ENCODE measurements at regions of chr20 and their contacts with region 1.

Region 1: GRCh38 chr20:31723319-31724078 is 831 bp upstream of the BCL2L1 start:
- DNase-seq: peak; percentile 99
- ATAC-seq: peak; percentile 88
- H3K4me3 Mint-ChIP-seq: peak overlapping the region; percentile 97
- H3K27ac Mint-ChIP-seq: peak overlapping the region; percentile 90
- H3K4me1 Mint-ChIP-seq: peaks cover 7% of the 10 kb centered on the region
- H3K27me3 Mint-ChIP-seq: no peaks in the 10 kb centered on the region

Region 2: GRCh38 chr20:30910937-30911725 is 812.4 kb before region 1 on chr20:
- CTCF ChIA-PET with region 1: no interaction called
- POLR2A ChIA-PET with region 1: no interaction called
- intact Hi-C with region 1: no loop called
- DNase-seq: no peak
- ATAC-seq: no peak
- H3K4me3 Mint-ChIP-seq: no peak overlapping the region
- H3K27ac Mint-ChIP-seq: no peak overlapping the region
- H3K4me1 Mint-ChIP-seq: no peaks in the 10 kb centered on the region
- H3K27me3 Mint-ChIP-seq: peaks cover 13% of the 10 kb centered on the region

Region 3: DNA sequence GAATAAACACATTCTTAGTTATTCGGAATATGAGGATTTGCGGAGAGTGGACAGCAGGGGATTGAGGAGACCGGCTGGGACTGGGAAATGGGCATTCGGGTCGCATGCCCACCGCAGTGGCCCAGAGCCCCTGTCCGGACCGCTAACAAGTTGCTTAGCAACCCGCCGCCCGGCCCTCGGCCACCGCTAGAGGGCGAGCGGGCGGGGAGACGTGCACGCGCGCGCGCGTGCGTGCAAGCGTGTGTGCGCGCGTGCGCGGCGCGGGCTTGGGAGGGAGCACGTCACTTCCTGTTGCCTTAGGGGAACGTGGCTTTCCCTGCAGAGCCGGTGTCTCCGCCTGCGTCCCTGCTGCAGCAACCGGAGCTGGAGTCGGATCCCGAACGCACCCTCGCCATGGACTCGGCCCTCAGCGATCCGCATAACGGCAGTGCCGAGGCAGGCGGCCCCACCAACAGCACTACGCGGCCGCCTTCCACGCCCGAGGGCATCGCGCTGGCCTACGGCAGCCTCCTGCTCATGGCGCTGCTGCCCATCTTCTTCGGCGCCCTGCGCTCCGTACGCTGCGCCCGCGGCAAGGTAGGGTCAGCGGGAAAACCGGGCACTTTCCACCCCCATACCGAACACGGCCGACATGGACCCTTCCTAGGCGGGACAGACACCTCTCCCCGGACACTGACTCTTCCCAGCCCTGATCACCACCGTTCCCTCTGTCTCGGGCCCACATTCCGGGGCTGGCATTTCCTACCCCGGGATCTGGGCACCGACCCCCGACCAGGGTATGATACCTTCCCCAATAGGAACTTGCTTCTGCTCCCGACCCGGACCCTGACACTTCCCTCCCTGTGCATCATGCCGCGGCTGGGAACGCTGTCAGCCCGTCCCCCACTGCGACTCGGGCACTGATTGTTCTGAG is 209.1 kb before region 1 on chr20 and contains the start of gene HM13:
- CTCF ChIA-PET with region 1: no interaction called
- POLR2A ChIA-PET with region 1: no interaction called
- intact Hi-C with region 1: loop called (anchors 1 kb)
- DNase-seq: peak; percentile 93
- ATAC-seq: peak; percentile 79
- H3K4me3 Mint-ChIP-seq: no peak within 1 kb of the TSS
- H3K27ac Mint-ChIP-seq: peak within 1 kb of the TSS; percentile 58
- H3K4me1 Mint-ChIP-seq: peaks cover 6% of the 10 kb centered on the region
- H3K27me3 Mint-ChIP-seq: no peaks in the 10 kb centered on the region
- total RNA-seq, gene HM13: 108 to 111 TPM

Region 4: DNA sequence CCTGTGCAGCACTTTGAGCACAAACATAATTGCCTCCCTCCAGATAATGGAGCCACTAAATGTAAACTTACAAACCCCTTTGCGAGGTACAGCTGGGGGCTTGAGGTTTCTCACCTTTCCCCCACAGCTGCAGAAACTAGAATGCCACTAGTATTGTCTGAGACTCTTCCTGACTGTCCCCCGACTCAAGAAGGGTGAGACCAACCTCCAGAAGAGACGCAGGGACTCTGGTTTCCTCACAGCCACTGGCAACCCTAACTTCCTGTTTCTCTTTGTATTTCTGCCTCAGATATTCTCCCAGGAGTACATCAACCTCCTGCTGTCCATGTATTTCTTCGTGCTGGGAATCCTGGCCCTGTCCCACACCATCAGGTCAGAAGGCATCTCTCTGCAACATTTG is 185.6 kb before region 1 on chr20:
- CTCF ChIA-PET with region 1: no interaction called
- POLR2A ChIA-PET with region 1: no interaction called
- intact Hi-C with region 1: no loop called
- DNase-seq: no peak
- ATAC-seq: no peak
- H3K4me3 Mint-ChIP-seq: no peak overlapping the region
- H3K27ac Mint-ChIP-seq: peak overlapping the region; percentile 19
- H3K4me1 Mint-ChIP-seq: peaks cover 16% of the 10 kb centered on the region
- H3K27me3 Mint-ChIP-seq: no peaks in the 10 kb centered on the region

Region 5: DNA sequence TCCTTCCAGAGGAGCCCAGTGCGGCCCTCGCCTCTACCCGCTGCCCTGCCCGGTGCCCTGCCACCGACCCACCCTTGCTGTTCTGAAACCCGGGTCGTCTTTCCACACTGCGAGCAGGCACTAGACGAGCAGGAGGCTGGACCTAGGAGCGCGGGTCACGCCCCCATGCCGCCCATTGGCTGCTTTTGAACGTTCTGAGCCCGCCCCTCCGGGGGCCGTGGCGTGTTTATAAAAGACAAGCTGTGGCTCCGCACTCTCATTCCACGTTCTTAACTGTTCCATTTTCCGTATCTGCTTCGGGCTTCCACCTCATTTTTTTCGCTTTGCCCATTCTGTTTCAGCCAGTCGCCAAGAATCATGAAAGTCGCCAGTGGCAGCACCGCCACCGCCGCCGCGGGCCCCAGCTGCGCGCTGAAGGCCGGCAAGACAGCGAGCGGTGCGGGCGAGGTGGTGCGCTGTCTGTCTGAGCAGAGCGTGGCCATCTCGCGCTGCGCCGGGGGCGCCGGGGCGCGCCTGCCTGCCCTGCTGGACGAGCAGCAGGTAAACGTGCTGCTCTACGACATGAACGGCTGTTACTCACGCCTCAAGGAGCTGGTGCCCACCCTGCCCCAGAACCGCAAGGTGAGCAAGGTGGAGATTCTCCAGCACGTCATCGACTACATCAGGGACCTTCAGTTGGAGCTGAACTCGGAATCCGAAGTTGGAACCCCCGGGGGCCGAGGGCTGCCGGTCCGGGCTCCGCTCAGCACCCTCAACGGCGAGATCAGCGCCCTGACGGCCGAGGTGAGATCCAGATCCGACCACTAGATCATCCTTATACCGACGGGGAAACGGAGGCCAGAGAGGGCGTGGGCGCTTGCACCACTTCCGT is 118.2 kb before region 1 on chr20 and contains the start of gene ID1:
- CTCF ChIA-PET with region 1: interaction called, 16 read pairs
- POLR2A ChIA-PET with region 1: interaction called, 3 read pairs
- intact Hi-C with region 1: no loop called
- DNase-seq: peak; percentile 93
- ATAC-seq: peak; percentile 82
- H3K4me3 Mint-ChIP-seq: peak within 1 kb of the TSS; percentile 91
- H3K27ac Mint-ChIP-seq: peak within 1 kb of the TSS; percentile 73
- H3K4me1 Mint-ChIP-seq: peaks cover 26% of the 10 kb centered on the region
- H3K27me3 Mint-ChIP-seq: peaks cover 43% of the 10 kb centered on the region
- total RNA-seq, gene ID1: 2.2 to 3.5 TPM

Region 6: DNA sequence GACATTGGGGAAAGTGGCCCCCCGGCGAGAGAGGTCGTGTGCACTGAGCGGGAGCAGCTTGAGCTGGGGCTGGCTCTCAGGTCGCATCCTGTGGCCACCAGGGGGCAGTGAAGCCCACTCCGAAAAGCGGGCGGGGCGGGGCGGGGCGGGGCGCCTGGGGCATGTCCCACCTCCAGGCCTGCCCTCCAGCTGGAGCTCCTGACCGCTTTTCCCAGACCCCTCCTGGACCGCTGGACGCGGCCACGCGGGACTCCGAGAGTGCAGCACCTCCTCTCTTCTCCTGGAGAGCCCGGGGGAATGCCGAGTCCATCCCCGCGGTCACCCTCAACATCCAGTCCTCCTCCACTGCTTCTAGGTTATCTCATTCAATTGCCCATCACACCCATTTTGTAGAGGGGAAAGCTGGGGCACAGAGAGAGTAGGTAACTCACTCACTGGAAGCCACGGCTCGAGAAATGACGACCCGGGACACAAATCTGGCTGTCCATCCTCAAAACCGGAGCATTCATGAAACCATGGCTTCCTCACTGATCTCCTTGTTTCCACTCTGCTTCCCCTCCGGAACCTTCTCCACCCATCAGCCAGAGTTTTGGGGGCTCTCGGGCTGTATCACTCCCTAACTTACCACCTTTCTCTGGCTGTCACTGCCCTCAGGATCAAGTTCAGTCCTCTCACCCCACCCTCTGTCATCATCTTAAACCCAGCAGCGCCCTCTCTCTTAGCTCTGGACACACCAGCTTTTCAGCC is 61.7 kb before region 1 on chr20:
- CTCF ChIA-PET with region 1: interaction called, 161 read pairs
- POLR2A ChIA-PET with region 1: interaction called, 26 read pairs
- intact Hi-C with region 1: loop called (anchors 1 kb)
- DNase-seq: peak; percentile 89
- ATAC-seq: peak; percentile 75
- H3K4me3 Mint-ChIP-seq: peak overlapping the region; percentile 45
- H3K27ac Mint-ChIP-seq: peak overlapping the region; percentile 89
- H3K4me1 Mint-ChIP-seq: peaks cover 49% of the 10 kb centered on the region
- H3K27me3 Mint-ChIP-seq: no peaks in the 10 kb centered on the region

Region 7: DNA sequence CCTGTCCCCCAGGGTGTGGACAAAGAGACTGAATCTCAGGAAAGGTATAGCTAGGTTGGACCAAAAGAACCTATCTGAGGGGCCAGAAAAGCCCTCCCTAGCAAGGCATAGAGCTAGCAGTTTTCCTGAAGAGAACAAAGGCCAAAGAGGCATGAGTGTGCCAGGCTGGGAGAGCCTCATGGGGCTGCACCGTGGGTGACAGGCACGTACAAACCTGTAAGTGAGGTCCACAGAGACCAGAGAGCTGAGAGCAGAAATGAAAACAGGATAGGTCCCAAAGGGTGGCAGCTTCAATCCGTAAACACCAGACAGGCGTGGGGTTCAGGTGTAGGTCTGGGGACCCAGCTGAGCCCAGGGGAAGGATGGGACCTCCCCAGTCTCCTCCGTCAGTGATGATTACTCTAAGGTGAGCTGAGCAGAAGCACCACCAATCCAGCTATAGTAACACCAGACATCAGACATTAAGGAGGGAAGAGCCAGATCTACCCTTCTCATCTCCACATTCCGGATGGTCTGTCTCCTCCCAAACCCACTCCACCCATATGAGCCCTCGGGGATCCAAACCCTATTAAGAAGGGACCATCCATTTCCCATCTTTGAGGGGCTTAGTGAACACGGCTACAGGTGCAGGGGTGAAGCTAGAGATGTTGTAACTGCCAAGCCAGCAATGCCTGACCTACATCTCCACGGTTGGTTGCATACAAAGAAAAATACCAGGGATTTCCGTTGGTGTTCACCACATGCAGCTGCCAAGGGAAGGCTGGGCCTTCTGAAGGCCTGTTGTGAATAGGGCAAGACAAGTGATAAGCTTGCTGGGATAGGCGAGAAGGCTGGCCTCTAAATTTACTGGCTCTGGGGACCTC is 39.1 kb before region 1 on chr20:
- CTCF ChIA-PET with region 1: interaction called, 10 read pairs
- POLR2A ChIA-PET with region 1: no interaction called
- intact Hi-C with region 1: no loop called
- DNase-seq: no peak
- ATAC-seq: peak; percentile 33
- H3K4me3 Mint-ChIP-seq: no peak overlapping the region
- H3K27ac Mint-ChIP-seq: peak overlapping the region; percentile 83
- H3K4me1 Mint-ChIP-seq: peaks cover 72% of the 10 kb centered on the region
- H3K27me3 Mint-ChIP-seq: no peaks in the 10 kb centered on the region

Region 8: GRCh38 chr20:31738729-31739561 is 15.4 kb after region 1 on chr20 and contains the start of gene TPX2:
- CTCF ChIA-PET with region 1: interaction called, 12 read pairs
- POLR2A ChIA-PET with region 1: interaction called, 6 read pairs
- intact Hi-C with region 1: loop called (anchors 1 kb)
- DNase-seq: peak; percentile 92
- ATAC-seq: peak; percentile 97
- H3K4me3 Mint-ChIP-seq: no peak within 1 kb of the TSS
- H3K27ac Mint-ChIP-seq: no peak within 1 kb of the TSS
- H3K4me1 Mint-ChIP-seq: peaks cover 2% of the 10 kb centered on the region
- H3K27me3 Mint-ChIP-seq: no peaks in the 10 kb centered on the region
- total RNA-seq, gene TPX2: 137 to 179 TPM